Right ventricle myocardium superior (tissue), 1 donor: ENCODE measurements at regions of chr6 and their contacts with region 1.

Region 1: GRCh38 chr6:133918208-133918930 is 29.5 kb downstream of the TCF21 start:
- DNase-seq: no peak
- ATAC-seq: no peak

Region 2: DNA sequence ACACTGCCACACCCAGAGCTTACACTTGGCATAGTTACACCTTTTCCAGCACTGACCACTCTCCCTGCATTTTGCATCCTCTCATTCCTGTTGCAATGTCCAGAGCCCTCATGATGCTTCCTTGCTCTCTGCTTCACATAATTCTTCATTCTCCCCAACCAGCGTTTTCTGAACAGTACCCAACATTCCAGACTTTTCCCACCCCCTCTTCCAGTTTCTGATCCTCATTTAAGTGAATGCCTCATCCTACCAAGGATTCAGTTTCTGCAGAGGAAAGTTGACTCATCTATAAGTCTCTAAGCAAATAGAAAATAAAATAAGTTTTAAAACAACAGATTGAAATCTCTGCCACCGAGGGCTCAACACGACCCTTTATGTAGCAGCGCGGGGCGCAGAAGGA is 350.7 kb before region 1 on chr6:
- intact Hi-C with region 1: loop called (anchors 2 kb)
- DNase-seq: no peak
- ATAC-seq: no peak

Region 3: GRCh38 chr6:133817460-133818047 is 100.8 kb before region 1 on chr6:
- intact Hi-C with region 1: no loop called
- DNase-seq: peak; percentile 39
- ATAC-seq: no peak